K562 (cell line): ENCODE measurements at regions of chr1 and their contacts with region 1.

Region 1: GRCh38 chr1:60978421-60979357 is 103.7 kb upstream of the NFIA start:
- DNase-seq: peak; percentile 63 to 80 (median 74)
- ATAC-seq: peak; percentile 98
- H3K4me3 ChIP-seq: no peak overlapping the region
- H3K27ac ChIP-seq: no peak overlapping the region
- H3K4me1 ChIP-seq: peaks cover 5 to 16% of the 10 kb centered on the region in 2 experiments; a peak in 3 of 5 replicates
- H3K27me3 ChIP-seq: no peaks in the 10 kb centered on the region
- CTCF ChIP-seq: peak; percentile 86 to 95 (median 90)
- EP300 ChIP-seq: 0 out of 2 replicates have a peak, but pooled peaks have one; percentile 11
- POLR2A ChIP-seq: no peak
- RAD21 ChIP-seq: peak; percentile 95 to 98

Region 2: DNA sequence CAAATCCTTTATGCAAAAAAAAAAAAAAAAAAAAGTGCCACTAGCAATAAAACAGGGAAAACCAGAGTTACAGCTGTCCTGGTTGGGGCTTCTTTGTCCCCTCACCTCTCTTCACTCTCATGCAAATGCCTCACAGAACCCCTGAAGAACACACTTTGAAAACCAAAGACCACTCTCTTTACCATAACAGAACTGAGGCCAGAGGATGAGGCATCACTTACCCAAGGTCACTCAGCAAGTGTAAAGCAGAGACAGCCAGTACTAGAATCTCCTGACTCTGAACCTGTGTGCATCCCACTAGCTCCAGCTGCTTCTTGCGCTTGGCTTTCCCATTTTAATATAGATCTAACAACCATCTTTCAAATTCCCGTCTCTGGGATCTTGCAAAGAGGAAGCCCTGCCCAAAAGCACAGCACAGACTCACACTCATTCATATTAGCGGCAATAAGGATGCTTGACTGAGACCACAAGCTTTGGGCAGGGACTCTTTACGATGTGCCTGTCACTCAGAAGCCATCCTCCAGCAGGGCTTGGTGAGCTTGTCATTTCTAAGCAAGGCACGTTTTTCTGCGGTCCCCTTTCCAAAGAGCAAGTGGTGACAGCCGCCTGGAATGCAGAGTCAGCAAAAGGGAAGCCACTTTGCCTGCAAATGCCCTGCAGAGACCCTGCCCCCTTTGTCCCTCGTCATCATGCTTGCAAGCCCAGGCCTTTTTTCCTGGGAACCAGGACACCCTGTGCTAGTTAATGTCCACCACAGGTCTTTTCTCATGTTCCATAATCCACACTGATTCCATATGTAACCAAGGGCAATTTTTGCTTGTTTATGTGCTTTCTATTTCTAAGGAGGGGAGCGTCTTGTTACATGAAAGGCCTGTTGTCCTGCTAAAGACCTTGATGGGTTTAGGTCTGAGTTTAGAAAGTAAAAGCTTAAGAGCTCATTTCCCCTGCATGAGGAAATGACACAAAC is 27.2 kb after region 1 on chr1:
- CTCF ChIA-PET with region 1: no interaction called
- POLR2A ChIA-PET with region 1: no interaction called
- in situ Hi-C with region 1: no loop called
- intact Hi-C with region 1: no loop called
- DNase-seq: no peak
- ATAC-seq: peak; percentile 37
- H3K4me3 ChIP-seq: no peak overlapping the region
- H3K27ac ChIP-seq: no peak overlapping the region
- H3K4me1 ChIP-seq: peaks cover 4 to 8% of the 10 kb centered on the region in 2 experiments; a peak in 3 of 5 replicates
- H3K27me3 ChIP-seq: no peaks in the 10 kb centered on the region
- CTCF ChIP-seq: no peak
- EP300 ChIP-seq: no peak
- POLR2A ChIP-seq: no peak
- RAD21 ChIP-seq: no peak

Region 3: DNA sequence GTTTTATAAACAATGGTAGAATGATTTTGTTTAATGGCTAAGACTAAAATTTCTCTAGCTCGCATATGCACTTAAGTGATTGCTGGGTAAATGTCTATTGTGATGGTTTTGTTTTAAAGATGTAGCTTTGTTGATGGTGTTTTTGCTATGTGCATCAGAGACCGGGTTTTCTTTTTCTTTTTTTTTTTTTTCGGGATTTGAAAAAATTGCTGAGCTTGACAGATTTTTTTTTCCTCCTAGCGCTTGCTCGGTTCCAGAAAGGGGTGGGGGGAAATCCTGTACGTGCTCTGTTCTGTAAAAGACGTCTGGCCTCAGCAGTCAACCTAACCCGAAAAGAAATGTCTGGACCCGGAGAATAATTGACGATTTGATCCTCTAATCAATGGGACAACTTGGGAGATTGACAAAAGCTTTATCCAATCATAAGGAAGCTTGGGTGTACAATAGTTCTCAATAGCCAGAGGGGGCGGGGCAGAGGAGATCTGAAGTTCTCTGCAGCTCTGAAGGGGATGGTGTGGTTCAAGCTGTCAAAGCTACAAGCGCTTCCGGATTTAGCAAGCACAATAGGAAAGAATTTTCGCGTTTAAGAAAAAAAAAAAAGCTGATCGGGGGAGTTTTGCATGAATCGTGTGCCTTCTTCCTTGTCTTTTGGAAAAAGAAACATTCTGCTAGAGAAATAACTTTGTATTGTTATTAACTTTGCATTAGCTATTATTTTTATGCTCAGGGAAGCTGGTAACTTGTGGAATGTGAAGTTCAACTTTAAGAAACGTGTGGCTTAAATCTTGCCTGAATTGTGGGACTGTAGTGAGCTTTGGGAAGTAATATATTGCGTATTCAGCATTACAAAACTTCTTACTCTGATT is 99.2 kb after region 1 on chr1:
- CTCF ChIA-PET with region 1: no interaction called
- POLR2A ChIA-PET with region 1: interaction called, 3 read pairs
- in situ Hi-C with region 1: no loop called
- intact Hi-C with region 1: loop called (anchors 10 kb)
- DNase-seq: peak; percentile 77 to 99 (median 90)
- ATAC-seq: peak; percentile 63
- H3K4me3 ChIP-seq: peak overlapping the region; percentile 47
- H3K27ac ChIP-seq: peak overlapping the region; percentile 73
- H3K4me1 ChIP-seq: peaks cover 8 to 34% of the 10 kb centered on the region in 2 experiments; a peak in 4 of 5 replicates
- H3K27me3 ChIP-seq: no peaks in the 10 kb centered on the region
- CTCF ChIP-seq: no peak; a peak in 1 of 6 replicates
- EP300 ChIP-seq: no peak
- POLR2A ChIP-seq: 0 out of 2 replicates have a peak, but pooled peaks have one; percentile 36
- RAD21 ChIP-seq: no peak

Region 4: GRCh38 chr1:61202854-61203598 is 224.3 kb after region 1 on chr1:
- CTCF ChIA-PET with region 1: no interaction called
- POLR2A ChIA-PET with region 1: no interaction called
- in situ Hi-C with region 1: no loop called
- intact Hi-C with region 1: loop called (anchors 10 kb)
- DNase-seq: no peak
- ATAC-seq: peak; percentile 35
- H3K4me3 ChIP-seq: no peak overlapping the region
- H3K27ac ChIP-seq: peak overlapping the region; percentile 52; the same call in 2 of the 3 replicates
- H3K4me1 ChIP-seq: peaks cover 3 to 20% of the 10 kb centered on the region in 2 experiments
- H3K27me3 ChIP-seq: no peaks in the 10 kb centered on the region
- CTCF ChIP-seq: no peak
- EP300 ChIP-seq: no peak
- POLR2A ChIP-seq: no peak
- RAD21 ChIP-seq: no peak

Region 5: DNA sequence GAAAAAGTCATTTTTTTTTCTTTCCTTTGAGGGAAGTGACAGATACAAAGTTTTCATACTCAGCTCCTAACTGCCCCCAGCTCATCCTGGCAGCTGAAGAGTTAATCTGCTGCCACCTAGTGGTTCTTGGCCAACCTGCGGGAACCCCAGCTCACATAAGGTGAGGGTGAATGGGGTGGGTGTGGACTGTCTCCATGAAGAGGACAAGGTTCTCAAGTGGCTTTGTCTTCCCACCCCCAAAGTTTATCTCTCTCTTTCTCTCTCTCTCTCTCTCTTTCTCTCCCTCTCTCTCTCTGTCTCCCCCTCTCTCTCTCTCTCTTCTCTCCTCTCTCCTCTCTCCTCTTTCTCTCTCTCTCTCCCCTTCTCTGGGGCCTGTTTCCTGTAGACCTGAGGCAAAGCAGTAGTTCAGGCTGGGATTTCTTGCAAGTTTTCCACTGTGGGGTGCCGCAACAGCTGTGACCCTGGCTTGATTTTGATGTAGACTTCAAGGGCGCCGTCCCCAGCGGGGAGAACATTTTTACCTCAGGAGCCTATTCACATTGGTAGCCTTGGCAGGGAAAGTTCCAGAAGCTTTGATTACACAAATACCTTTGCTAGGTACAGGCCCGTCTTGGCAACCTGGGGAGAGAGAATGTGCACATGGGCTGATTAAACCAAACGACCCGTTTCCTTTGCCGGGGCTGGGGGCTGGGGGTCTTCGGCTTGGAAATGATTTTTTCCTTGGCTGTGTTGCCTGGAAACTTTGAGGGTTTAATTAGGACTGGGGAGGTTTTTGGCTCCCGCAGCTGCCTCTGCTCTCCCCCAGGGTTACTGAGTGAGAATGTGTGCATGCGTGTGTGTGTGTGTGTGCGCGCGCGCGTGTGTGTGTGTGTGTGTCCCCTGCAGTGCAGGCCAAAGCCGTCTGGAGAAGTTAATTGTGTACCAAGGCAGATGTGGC is 610.3 kb after region 1 on chr1:
- CTCF ChIA-PET with region 1: no interaction called
- POLR2A ChIA-PET with region 1: no interaction called
- in situ Hi-C with region 1: loop called (anchors 10 kb)
- intact Hi-C with region 1: loop called (anchors 2 kb)
- DNase-seq: peak; percentile 69 to 80 (median 72)
- ATAC-seq: peak; percentile 99
- H3K4me3 ChIP-seq: no peak overlapping the region
- H3K27ac ChIP-seq: no peak overlapping the region
- H3K4me1 ChIP-seq: no peaks in the 10 kb centered on the region
- H3K27me3 ChIP-seq: peaks cover 22 to 35% of the 10 kb centered on the region in 2 experiments
- CTCF ChIP-seq: peak; percentile 84 to 87 (median 85)
- EP300 ChIP-seq: no peak
- POLR2A ChIP-seq: no peak
- RAD21 ChIP-seq: peak; percentile 73 to 89

Region 6: DNA sequence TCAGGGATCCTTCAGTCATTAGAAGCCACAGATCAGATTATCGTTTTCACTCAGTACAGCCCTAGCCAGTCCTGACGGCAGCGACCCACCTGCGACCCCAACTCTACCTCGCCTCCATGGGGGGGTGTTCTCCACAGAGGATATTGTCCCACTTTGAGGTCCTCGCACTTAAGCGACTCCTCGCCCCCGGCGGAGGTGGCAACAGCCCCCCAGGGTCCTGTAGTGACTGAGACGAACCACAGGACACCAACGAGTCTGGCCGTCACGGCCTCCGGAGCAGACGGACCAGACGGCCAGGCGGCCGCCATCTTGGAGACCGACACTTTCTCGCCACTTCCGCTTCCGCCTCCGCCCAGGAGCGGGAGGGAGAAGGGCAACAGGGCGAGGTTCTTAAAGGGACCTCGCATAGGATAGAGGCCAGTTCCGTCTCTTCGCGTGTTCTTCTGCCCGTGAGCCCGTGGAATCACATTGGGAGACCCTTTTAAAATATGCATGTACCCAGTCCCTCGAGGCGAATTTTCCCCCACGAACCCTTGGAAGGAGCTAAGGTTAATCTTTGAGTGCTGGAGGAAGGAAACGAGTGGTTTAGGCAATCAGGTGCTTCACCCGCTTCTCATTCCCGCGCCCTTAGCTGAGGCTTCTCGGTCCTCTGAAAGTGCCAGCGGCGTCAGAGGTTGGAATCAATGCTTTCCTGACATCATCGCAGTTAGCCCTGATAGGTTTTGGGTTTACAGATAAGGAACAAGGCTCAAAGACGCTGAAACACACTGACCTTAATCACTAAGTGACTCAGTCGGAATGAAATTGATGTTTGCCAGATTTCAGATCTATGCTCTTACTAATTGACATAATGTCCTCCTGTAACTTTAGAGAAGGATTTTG is 746.4 kb after region 1 on chr1 and contains the start of gene TM2D1:
- CTCF ChIA-PET with region 1: no interaction called
- POLR2A ChIA-PET with region 1: no interaction called
- in situ Hi-C with region 1: no loop called
- intact Hi-C with region 1: loop called (anchors 10 kb)
- DNase-seq: peak; percentile 87 to 95 (median 89)
- ATAC-seq: peak; percentile 98
- H3K4me3 ChIP-seq: peak within 1 kb of the TSS; percentile 73
- H3K27ac ChIP-seq: peak within 1 kb of the TSS; percentile 94
- H3K4me1 ChIP-seq: no peaks in the 10 kb centered on the region; a peak in 1 of 5 replicates
- H3K27me3 ChIP-seq: no peaks in the 10 kb centered on the region
- CTCF ChIP-seq: no peak; a peak in 1 of 6 replicates
- EP300 ChIP-seq: peak; percentile 0; the same call in 1 of the 2 replicates
- POLR2A ChIP-seq: peak; percentile 99
- RAD21 ChIP-seq: no peak
- polyA plus RNA-seq, gene TM2D1: 47.7 to 53.3 TPM